ENCODE measurements at regions of chr19 and their contacts with region 1.

Region 1: DNA sequence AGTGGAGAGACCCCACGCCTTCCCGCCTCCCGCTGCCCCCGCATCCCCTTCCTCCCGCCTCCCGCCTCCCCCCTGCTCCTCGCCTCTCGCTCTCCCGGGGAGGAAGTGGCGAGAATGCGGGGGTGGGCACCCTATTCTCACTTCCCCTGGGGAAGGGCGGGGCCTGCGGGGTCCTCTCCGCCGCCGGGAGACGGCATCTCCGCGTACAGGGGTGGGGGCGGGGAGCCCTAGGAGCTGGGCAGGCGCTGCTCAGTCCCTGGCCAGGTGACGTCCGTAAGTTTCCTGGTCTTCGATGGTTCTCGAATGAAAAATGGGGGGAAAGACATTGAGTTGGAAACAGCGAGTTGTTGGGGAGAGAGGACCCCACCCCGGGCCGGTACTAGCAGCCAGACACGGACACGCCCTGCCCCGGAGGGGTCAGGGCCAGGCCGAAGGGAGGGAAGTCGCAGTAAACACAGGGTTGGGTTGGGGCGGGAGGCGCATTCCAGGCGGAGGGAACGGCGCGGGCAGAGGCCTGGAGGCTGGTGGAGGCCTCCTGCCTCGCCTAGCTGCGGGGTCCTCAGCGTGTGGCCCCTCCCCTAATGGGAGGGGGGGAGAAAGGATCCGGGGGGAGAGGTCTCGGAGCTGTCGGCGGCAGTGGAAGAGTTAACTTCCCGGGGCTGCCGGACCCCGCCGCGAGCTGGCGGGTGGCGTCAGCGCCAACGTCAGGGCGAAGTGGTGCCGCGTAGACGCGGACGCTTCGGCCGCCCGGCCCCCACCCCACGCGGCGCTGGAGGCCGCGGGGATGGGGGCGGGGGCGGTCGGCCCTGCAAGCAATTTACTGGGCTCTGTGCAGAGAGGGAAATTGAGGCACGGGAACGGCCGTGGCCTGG is 10.4 kb upstream of the JUND start:
- DNase-seq: peak; percentile 82
- H3K4me3 Mint-ChIP-seq: peak overlapping the region; percentile 89
- H3K27ac Mint-ChIP-seq: peak overlapping the region; percentile 96
- H3K4me1 Mint-ChIP-seq: peaks cover 68% of the 10 kb centered on the region
- H3K27me3 Mint-ChIP-seq: no peaks in the 10 kb centered on the region

Region 2: DNA sequence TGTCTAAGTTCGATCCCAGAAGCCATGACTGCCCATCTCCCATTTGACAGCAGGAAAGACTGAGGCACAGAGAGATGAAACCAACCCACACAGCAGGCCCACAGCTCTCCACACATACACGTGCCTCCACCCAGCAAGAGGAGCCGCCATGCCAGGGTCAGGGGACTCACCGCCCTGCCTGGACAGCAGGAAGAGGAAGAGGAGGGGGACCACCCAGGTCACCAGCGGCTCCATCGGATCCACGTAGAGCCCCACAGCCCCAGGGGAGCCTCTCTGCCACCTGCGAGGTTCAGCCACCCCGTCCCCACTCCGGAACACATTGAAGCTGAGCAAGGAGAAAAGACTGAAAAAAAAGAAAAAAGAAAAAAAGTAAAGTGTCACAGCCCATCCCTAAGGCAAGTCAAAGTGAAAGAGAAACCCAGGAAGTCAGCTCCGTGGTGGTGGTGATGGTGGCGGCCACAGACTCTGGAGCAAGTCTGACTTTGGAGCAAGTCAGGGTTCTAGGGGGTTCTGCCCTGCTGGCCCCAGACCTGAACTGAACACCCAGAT is 205.2 kb before region 1 on chr19 and contains the start of gene IL12RB1:
- intact Hi-C with region 1: loop called (anchors 5 kb)
- DNase-seq: peak; percentile 75
- H3K4me3 Mint-ChIP-seq: peak within 1 kb of the TSS; percentile 97
- H3K27ac Mint-ChIP-seq: peak within 1 kb of the TSS; percentile 99
- H3K4me1 Mint-ChIP-seq: peaks cover 60% of the 10 kb centered on the region
- H3K27me3 Mint-ChIP-seq: no peaks in the 10 kb centered on the region
- total RNA-seq, gene IL12RB1: 44.5 and 47.5 TPM in 2 replicates

Region 3: GRCh38 chr19:18160971-18161635 is 130.7 kb before region 1 on chr19:
- intact Hi-C with region 1: no loop called
- DNase-seq: peak; percentile 80
- H3K4me3 Mint-ChIP-seq: peak overlapping the region; percentile 72
- H3K27ac Mint-ChIP-seq: no peak overlapping the region
- H3K4me1 Mint-ChIP-seq: peaks cover 5% of the 10 kb centered on the region
- H3K27me3 Mint-ChIP-seq: no peaks in the 10 kb centered on the region

Region 4: GRCh38 chr19:18281082-18282020 is 10.5 kb before region 1 on chr19 and contains the start of gene JUND:
- intact Hi-C with region 1: loop called (anchors 1 kb)
- DNase-seq: peak; percentile 98
- H3K4me3 Mint-ChIP-seq: peak within 1 kb of the TSS; percentile 88
- H3K27ac Mint-ChIP-seq: peak within 1 kb of the TSS; percentile 98
- H3K4me1 Mint-ChIP-seq: peaks cover 49% of the 10 kb centered on the region
- H3K27me3 Mint-ChIP-seq: no peaks in the 10 kb centered on the region
- total RNA-seq, gene JUND: 431 and 455 TPM in 2 replicates

Region 5: GRCh38 chr19:18304458-18305310 is 12.9 kb after region 1 on chr19:
- intact Hi-C with region 1: loop called (anchors 1 kb)
- DNase-seq: peak; percentile 77
- H3K4me3 Mint-ChIP-seq: peak overlapping the region; percentile 92
- H3K27ac Mint-ChIP-seq: peak overlapping the region; percentile 98
- H3K4me1 Mint-ChIP-seq: peaks cover 40% of the 10 kb centered on the region
- H3K27me3 Mint-ChIP-seq: peaks cover 1% of the 10 kb centered on the region

Region 6: DNA sequence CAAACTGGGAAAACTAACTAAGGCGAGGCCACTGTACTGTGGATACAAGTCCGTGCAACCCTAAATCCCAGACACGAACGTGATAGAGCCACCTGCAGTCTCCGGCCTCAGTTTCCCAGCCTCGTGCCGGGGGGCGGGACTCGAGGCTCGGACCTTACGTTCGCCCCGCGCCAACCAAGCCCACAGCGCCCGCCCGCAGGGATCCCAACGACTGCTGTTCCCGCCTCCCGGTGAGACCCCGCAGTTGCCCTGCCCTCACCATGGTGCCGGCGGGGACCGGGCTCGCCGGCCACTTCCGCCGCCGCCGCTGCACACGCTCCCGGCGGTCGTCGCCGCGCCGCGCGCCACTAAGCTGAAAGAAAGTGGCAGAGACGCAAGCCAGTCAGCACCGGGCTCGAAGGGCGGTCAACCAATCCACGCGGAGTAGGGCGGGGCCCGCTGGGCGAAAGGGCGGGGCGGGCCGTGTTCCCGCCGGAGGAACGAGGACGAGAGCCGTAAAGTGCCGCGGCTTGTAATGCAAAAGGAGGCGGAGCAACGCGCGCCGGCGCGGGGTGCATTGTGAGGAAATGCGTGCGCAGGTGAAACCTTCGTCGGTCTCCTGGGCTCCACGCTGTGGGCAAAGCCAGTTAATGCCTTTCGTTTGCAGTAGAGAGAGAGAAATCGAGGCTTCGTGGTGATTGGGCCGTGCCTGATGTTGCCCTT is 31.1 kb after region 1 on chr19 and contains the start of gene LSM4:
- intact Hi-C with region 1: loop called (anchors 1 kb)
- DNase-seq: peak; percentile 99
- H3K4me3 Mint-ChIP-seq: peak within 1 kb of the TSS; percentile 95
- H3K27ac Mint-ChIP-seq: peak within 1 kb of the TSS; percentile 93
- H3K4me1 Mint-ChIP-seq: peaks cover 53% of the 10 kb centered on the region
- H3K27me3 Mint-ChIP-seq: no peaks in the 10 kb centered on the region
- total RNA-seq, gene LSM4: 198 and 200 TPM in 2 replicates

Region 7: DNA sequence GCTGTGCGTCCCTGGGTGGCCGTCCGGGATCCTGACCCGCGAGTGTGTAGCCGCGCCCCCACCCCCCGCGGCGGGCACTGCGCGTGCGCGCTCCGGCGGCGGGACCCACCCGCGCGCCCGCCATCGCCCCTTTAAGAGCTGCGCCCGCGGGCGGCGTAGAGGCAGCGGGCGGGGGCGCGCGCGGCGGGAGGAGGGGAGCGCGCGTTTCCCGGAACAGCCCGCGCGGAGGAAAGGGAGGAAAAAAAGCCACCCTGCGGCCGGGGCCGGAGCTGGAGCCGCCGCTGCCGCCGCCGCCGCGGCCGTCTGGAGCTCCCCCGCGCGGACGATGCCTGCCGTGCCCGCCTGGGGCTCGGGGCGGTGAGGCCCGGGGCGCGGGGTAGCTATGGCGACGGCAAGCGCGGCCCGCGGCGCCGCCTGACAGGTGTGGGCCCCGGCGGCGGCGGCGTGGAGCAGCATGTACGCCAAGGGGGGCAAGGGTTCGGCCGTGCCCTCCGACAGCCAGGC is 127.4 kb after region 1 on chr19 and contains the start of gene SSBP4:
- intact Hi-C with region 1: loop called (anchors 5 kb)
- DNase-seq: peak; percentile 75
- H3K4me3 Mint-ChIP-seq: peak within 1 kb of the TSS; percentile 89
- H3K27ac Mint-ChIP-seq: peak within 1 kb of the TSS; percentile 82
- H3K4me1 Mint-ChIP-seq: peaks cover 78% of the 10 kb centered on the region
- H3K27me3 Mint-ChIP-seq: peaks cover 5% of the 10 kb centered on the region
- total RNA-seq, gene SSBP4: 135 and 141 TPM in 2 replicates

Region 8: GRCh38 chr19:18846862-18847548 is 555.2 kb after region 1 on chr19:
- intact Hi-C with region 1: no loop called
- DNase-seq: peak; percentile 51
- H3K4me3 Mint-ChIP-seq: no peak overlapping the region
- H3K27ac Mint-ChIP-seq: no peak overlapping the region
- H3K4me1 Mint-ChIP-seq: peaks cover 55% of the 10 kb centered on the region
- H3K27me3 Mint-ChIP-seq: no peaks in the 10 kb centered on the region

Measured in activated T-helper 1 cell treated with anti-CD3 and anti-CD28 coated beads, Interleukin-12 subunit alpha, Interleukin-12 subunit beta, Interleukin-2, Interleukin-4 antibody, amounts not matched to agents 30 ng/mL and 10 ng/mL and 1 ng/mL, durations not matched to agents 14 hours and 24 hours and 36 hours (primary cell).